WTC11 (cell line): ENCODE measurements at regions of chr15 and their contacts with region 1.

Region 1: GRCh38 chr15:45166834-45167630 is 20.7 kb downstream of the SHF start:
- DNase-seq: peak; percentile 90
- ATAC-seq: peak; percentile 81
- H3K4me3 Mint-ChIP-seq: peak overlapping the region; percentile 57
- H3K27ac Mint-ChIP-seq: no peak overlapping the region
- H3K4me1 Mint-ChIP-seq: peaks cover 54% of the 10 kb centered on the region
- H3K27me3 Mint-ChIP-seq: peaks cover 1% of the 10 kb centered on the region
- CTCF ChIP-seq: peak; percentile 53

Region 2: GRCh38 chr15:45134682-45135604 is 32.1 kb before region 1 on chr15:
- CTCF ChIA-PET with region 1: interaction called, 18 read pairs
- POLR2A ChIA-PET with region 1: no interaction called
- DNase-seq: peak; percentile 60
- ATAC-seq: peak; percentile 72
- H3K4me3 Mint-ChIP-seq: peak overlapping the region; percentile 66
- H3K27ac Mint-ChIP-seq: no peak overlapping the region
- H3K4me1 Mint-ChIP-seq: peaks cover 12% of the 10 kb centered on the region
- H3K27me3 Mint-ChIP-seq: peaks cover 83% of the 10 kb centered on the region
- CTCF ChIP-seq: no peak

Region 3: DNA sequence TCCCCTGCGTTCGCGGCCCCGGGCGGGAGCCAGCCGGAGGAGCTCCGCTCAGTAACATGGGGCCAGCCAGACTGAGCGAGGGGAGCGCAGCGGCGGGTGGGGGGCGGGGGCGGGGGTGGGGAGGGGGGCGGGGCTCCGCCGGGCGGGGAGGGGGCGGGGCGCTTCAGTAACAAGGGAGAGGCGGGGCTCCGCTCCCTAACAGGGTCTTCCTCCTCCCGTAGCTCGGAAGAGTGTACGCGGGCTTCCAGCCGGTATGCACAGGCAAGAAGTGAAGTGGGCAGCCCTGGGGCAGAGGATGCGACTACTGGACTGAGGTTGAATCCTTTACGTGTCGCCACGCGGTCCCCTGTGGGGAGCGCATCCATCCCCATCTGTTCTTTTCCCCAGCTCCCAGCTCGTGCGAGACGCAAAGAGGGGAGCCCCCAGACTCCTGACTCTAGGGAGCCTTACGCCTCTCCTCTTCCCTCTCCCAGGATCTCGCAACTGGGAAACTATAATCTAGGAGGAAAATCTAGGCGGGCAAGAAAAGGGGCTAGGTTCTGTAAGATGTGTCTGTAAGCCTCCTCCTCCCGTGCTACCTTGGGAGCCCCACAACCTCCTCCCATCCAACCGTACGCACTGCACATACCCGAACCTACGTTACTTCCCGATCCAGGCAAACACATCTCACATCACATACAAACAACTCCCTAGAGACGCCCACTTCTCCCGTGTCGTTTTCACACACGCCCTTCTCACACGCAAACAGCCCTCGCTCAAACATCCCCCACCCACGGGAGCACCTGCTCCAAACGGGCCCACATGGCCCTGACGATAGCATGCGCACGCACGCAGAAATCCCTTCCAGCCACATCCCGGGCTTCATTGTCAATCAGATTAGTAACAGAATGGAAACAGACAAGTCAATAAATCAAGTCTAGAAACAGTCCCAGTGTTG is 21.1 kb after region 1 on chr15 and contains the start of gene SHF:
- CTCF ChIA-PET with region 1: interaction called, 36 read pairs
- POLR2A ChIA-PET with region 1: interaction called, 23 read pairs
- DNase-seq: peak; percentile 69
- ATAC-seq: peak; percentile 77
- H3K4me3 Mint-ChIP-seq: peak within 1 kb of the TSS; percentile 91
- H3K27ac Mint-ChIP-seq: no peak within 1 kb of the TSS; the same call in 1 of the 2 replicates
- H3K4me1 Mint-ChIP-seq: peaks cover 40% of the 10 kb centered on the region
- H3K27me3 Mint-ChIP-seq: peaks cover 34% of the 10 kb centered on the region
- CTCF ChIP-seq: no peak
- total RNA-seq, gene SHF: 30.6 to 33.1 TPM (median 31.0 TPM) in 3 replicates

Region 4: DNA sequence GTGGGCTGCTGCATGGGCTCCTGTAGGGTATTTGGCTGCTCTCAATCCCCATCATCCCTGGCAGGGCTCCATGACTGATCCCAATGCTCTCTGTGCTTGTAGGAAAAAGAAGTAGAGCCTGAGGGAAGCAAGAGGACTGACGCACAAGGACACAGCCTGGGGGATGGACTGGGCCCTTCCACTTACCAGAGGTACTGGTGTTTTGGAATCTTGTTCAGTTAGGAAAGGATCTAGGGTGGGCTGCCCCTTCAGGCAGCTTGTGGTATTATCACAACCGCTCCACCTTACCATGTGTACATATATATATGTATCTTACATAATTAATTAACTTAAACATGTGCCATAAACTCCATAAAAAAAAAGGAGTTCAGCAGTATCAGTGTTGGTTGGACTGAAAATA is 86.3 kb after region 1 on chr15:
- CTCF ChIA-PET with region 1: interaction called, 25 read pairs
- POLR2A ChIA-PET with region 1: no interaction called
- DNase-seq: peak; percentile 40
- ATAC-seq: peak; percentile 99
- H3K4me3 Mint-ChIP-seq: no peak overlapping the region
- H3K27ac Mint-ChIP-seq: no peak overlapping the region
- H3K4me1 Mint-ChIP-seq: 0 out of 2 replicates have a peak, but pooled peaks cover 2% of the 10 kb centered on the region
- H3K27me3 Mint-ChIP-seq: no peaks in the 10 kb centered on the region; the same call in 1 of the 2 replicates
- CTCF ChIP-seq: peak; percentile 60

Region 5: DNA sequence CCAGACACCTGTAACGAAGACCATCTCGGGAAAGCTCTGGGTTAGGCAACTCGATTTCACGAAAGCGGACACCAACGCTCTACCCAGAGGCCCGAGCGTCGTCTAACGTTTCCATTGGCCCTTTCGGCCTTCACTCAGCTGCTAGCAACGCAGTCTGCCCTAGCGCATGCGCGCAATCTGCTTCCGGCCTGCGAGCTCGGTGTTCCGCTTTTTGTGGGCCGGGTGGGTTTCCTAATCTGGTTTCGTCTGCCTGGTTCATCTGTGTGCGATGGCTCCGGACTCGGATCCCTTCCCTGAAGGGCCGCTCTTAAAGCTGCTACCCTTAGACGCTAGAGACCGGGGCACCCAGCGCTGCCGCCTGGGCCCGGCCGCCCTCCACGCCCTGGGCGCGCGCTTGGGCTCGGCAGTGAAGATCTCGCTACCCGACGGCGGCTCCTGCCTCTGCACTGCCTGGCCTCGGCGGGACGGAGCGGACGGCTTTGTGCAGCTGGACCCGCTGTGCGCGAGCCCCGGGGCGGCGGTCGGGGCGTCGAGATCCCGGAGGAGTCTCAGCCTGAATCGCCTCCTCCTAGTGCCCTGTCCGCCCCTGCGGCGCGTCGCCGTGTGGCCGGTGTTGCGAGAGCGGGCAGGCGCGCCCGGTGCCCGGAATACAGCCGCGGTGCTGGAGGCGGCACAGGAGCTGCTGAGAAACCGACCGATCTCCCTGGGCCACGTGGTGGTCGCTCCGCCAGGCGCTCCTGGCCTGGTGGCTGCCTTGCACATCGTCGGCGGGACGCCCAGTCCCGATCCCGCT is 235.3 kb after region 1 on chr15:
- CTCF ChIA-PET with region 1: interaction called, 48 read pairs
- POLR2A ChIA-PET with region 1: interaction called, 7 read pairs
- DNase-seq: peak; percentile 91
- ATAC-seq: peak; percentile 97
- H3K4me3 Mint-ChIP-seq: peak overlapping the region; percentile 95
- H3K27ac Mint-ChIP-seq: no peak overlapping the region
- H3K4me1 Mint-ChIP-seq: peaks cover 18% of the 10 kb centered on the region
- H3K27me3 Mint-ChIP-seq: peaks cover 7% of the 10 kb centered on the region
- CTCF ChIP-seq: no peak